CD4-positive, alpha-beta T cell (primary cell): ENCODE measurements at regions of chr11 and their contacts with region 1.

Region 1: GRCh38 chr11:14480716-14481115 is 18.9 kb downstream of the COPB1 start:
- DNase-seq: no peak
- ATAC-seq: no peak
- H3K4me3 ChIP-seq: no peak overlapping the region
- H3K4me3 Mint-ChIP-seq: no peak overlapping the region
- H3K27ac ChIP-seq: no peak overlapping the region
- H3K27ac Mint-ChIP-seq: no peak overlapping the region
- H3K4me1 ChIP-seq: no peaks in the 10 kb centered on the region
- H3K4me1 Mint-ChIP-seq: peaks cover 15% of the 10 kb centered on the region
- H3K27me3 ChIP-seq: no peaks in the 10 kb centered on the region
- H3K27me3 Mint-ChIP-seq: no peaks in the 10 kb centered on the region
- CTCF ChIP-seq: no peak

Region 2: DNA sequence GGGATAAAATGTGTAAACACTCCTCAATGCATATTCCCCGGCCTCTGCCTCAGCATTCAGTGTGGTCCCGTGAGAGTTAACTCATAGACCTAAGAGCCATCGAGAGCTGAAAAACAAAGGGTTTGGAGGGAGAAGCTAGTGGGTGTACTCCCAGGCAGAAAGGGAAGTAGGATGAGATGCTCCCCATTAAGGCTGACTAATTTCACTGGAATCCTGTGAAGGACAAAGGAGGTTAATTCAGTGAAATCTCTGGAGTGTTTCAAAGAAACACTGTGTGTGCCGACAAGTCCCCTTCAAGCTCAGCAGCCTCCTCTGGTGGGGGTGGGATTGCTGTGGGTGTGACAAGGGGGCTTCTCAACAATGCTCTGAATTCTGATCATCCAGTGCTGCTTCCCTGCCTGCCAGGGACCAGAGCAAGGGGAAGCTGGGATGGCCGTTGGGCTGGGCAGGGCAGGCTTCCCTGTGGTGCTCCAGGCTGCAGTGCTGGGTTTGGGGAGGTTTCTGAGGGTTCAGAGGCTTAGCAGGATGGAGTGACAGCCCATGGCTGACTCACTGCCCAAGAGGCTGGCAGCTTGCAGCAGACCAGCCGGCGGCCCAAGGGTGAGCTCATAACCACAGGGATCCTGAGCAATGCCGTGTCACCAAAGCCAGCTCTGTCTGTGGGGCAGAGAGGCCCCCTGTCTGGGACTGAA is 1264.6 kb before region 1 on chr11:
- CTCF ChIA-PET with region 1: no interaction called
- POLR2A ChIA-PET with region 1: no interaction called
- intact Hi-C with region 1: no loop called
- DNase-seq: peak in 1 of 14 experiments; percentile 29
- ATAC-seq: no peak
- H3K4me3 ChIP-seq: no peak overlapping the region
- H3K4me3 Mint-ChIP-seq: no peak overlapping the region
- H3K27ac ChIP-seq: no peak overlapping the region
- H3K27ac Mint-ChIP-seq: no peak overlapping the region
- H3K4me1 ChIP-seq: no peaks in the 10 kb centered on the region
- H3K4me1 Mint-ChIP-seq: no peaks in the 10 kb centered on the region
- H3K27me3 ChIP-seq: no peaks in the 10 kb centered on the region
- H3K27me3 Mint-ChIP-seq: no peaks in the 10 kb centered on the region
- CTCF ChIP-seq: no peak

Region 3: DNA sequence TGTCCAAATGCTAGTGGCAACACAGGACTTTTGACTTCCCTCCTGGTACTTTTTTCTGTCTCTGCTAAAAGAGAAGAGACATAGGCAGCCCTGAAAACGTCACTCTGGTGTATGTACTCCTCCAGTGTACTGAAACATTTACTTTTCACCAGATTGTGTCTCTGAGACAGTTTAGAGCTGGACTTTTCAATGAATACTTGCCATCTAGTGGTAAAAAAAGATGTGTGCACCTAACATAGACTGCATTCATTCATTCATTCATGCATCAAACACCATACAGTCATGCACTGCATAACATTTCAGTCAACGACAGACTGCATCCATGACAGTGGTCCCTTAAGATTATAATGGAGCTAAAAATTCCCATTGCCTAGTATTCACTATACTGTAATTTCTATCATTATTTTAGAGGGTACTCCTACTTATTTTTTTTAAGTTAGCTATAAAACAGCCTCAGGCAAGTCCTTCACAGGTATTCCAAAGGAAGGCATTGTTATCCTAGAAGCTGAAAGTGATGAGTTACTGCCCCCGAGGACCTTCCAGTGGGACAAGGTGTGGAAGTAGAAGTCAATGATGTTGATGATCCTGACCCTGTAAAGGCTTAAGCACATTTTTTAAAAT is 332.0 kb before region 1 on chr11:
- CTCF ChIA-PET with region 1: no interaction called
- POLR2A ChIA-PET with region 1: no interaction called
- intact Hi-C with region 1: no loop called
- DNase-seq: peak in 3 of 14 experiments; percentile 56 to 64 (median 63)
- ATAC-seq: peak; percentile 97
- H3K4me3 ChIP-seq: no peak overlapping the region
- H3K4me3 Mint-ChIP-seq: no peak overlapping the region
- H3K27ac ChIP-seq: no peak overlapping the region
- H3K27ac Mint-ChIP-seq: no peak overlapping the region
- H3K4me1 ChIP-seq: no peaks in the 10 kb centered on the region
- H3K4me1 Mint-ChIP-seq: peaks cover 5% of the 10 kb centered on the region
- H3K27me3 ChIP-seq: no peaks in the 10 kb centered on the region
- H3K27me3 Mint-ChIP-seq: no peaks in the 10 kb centered on the region
- CTCF ChIP-seq: peak; percentile 68

Region 4: GRCh38 chr11:14308114-14308896 is 172.4 kb before region 1 on chr11:
- CTCF ChIA-PET with region 1: no interaction called
- POLR2A ChIA-PET with region 1: no interaction called
- intact Hi-C with region 1: no loop called
- DNase-seq: peak in 3 of 14 experiments; percentile 41 to 58 (median 54)
- ATAC-seq: peak; percentile 80
- H3K4me3 ChIP-seq: no peak overlapping the region
- H3K4me3 Mint-ChIP-seq: no peak overlapping the region
- H3K27ac ChIP-seq: no peak overlapping the region
- H3K27ac Mint-ChIP-seq: no peak overlapping the region
- H3K4me1 ChIP-seq: peaks cover under 1% of the 10 kb centered on the region
- H3K4me1 Mint-ChIP-seq: peaks cover 8% of the 10 kb centered on the region
- H3K27me3 ChIP-seq: no peaks in the 10 kb centered on the region
- H3K27me3 Mint-ChIP-seq: no peaks in the 10 kb centered on the region
- CTCF ChIP-seq: peak; percentile 61

Region 5: DNA sequence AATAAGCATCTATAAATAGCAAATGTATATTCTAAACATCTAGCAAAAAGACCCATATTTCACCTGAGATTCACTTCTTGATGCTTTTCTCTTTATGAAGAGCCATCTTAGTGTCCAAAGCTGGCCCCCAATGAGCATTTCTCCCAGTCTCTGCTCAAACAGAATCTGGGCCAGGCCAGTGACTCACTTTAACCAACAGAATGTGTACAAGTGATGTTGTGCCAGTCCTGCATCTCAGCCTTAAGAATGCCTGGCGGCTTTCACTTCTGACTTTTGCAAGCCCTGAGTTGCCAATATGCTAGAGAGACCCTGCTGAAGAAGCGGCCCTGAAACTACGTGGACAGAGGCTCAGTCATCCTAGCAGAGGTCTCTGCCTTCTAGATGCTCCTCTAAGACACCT is 25.8 kb after region 1 on chr11:
- CTCF ChIA-PET with region 1: no interaction called
- POLR2A ChIA-PET with region 1: no interaction called
- intact Hi-C with region 1: no loop called
- DNase-seq: no peak
- ATAC-seq: no peak
- H3K4me3 ChIP-seq: no peak overlapping the region
- H3K4me3 Mint-ChIP-seq: no peak overlapping the region
- H3K27ac ChIP-seq: no peak overlapping the region
- H3K27ac Mint-ChIP-seq: peak overlapping the region; percentile 15
- H3K4me1 ChIP-seq: no peaks in the 10 kb centered on the region
- H3K4me1 Mint-ChIP-seq: peaks cover 8% of the 10 kb centered on the region
- H3K27me3 ChIP-seq: no peaks in the 10 kb centered on the region
- H3K27me3 Mint-ChIP-seq: no peaks in the 10 kb centered on the region
- CTCF ChIP-seq: no peak

Region 6: GRCh38 chr11:14519917-14520746 is 39.4 kb after region 1 on chr11 and contains the start of gene PSMA1:
- CTCF ChIA-PET with region 1: no interaction called
- POLR2A ChIA-PET with region 1: no interaction called
- intact Hi-C with region 1: loop called in 1 of 2 experiments (anchors 5 kb)
- DNase-seq: peak; percentile 79 to 95 (median 87)
- ATAC-seq: peak; percentile 90
- H3K4me3 ChIP-seq: peak within 1 kb of the TSS; percentile 74
- H3K4me3 Mint-ChIP-seq: peak within 1 kb of the TSS; percentile 96
- H3K27ac ChIP-seq: peak within 1 kb of the TSS; percentile 81 to 83
- H3K27ac Mint-ChIP-seq: peak within 1 kb of the TSS; percentile 94
- H3K4me1 ChIP-seq: peaks cover 14% of the 10 kb centered on the region
- H3K4me1 Mint-ChIP-seq: peaks cover 37% of the 10 kb centered on the region
- H3K27me3 ChIP-seq: no peaks in the 10 kb centered on the region
- H3K27me3 Mint-ChIP-seq: no peaks in the 10 kb centered on the region
- CTCF ChIP-seq: peak; percentile 36
- total RNA-seq, gene PSMA1: 170 to 175 TPM